K562 (cell line): ENCODE measurements at regions of chr9 and their contacts with region 1.

Region 1: GRCh38 chr9:83965350-83966208 is 14.4 kb downstream of the HNRNPK start:
- DNase-seq: peak in 2 of 4 experiments; percentile 21
- ATAC-seq: peak; percentile 64
- H3K4me3 ChIP-seq: no peak overlapping the region
- H3K27ac ChIP-seq: peak overlapping the region; percentile 34; the same call in 2 of the 3 replicates
- H3K4me1 ChIP-seq: peaks cover 0 to 4% of the 10 kb centered on the region in 2 experiments; a peak in 3 of 5 replicates
- H3K27me3 ChIP-seq: no peaks in the 10 kb centered on the region
- CTCF ChIP-seq: no peak
- EP300 ChIP-seq: no peak
- POLR2A ChIP-seq: peak; percentile 82
- RAD21 ChIP-seq: no peak

Region 2: GRCh38 chr9:83980395-83981125 is 15.0 kb after region 1 on chr9 and contains the start of gene RMI1:
- CTCF ChIA-PET with region 1: interaction called, 4 read pairs
- POLR2A ChIA-PET with region 1: interaction called, 16 read pairs
- in situ Hi-C with region 1: no loop called
- intact Hi-C with region 1: no loop called
- DNase-seq: peak; percentile 76 to 98 (median 84)
- ATAC-seq: peak; percentile 72
- H3K4me3 ChIP-seq: peak within 1 kb of the TSS; percentile 74
- H3K27ac ChIP-seq: peak within 1 kb of the TSS; percentile 100
- H3K4me1 ChIP-seq: peaks cover 4 to 7% of the 10 kb centered on the region in 2 experiments; a peak in 1 of 5 replicates
- H3K27me3 ChIP-seq: no peaks in the 10 kb centered on the region
- CTCF ChIP-seq: peak in 1 of 3 experiments; percentile 10; a peak in 1 of 6 replicates
- EP300 ChIP-seq: no peak
- POLR2A ChIP-seq: peak; percentile 93
- RAD21 ChIP-seq: no peak
- polyA plus RNA-seq, gene RMI1: 7.7 to 10.6 TPM